ENCODE measurements at regions of chr17 and their contacts with region 1.

Region 1: DNA sequence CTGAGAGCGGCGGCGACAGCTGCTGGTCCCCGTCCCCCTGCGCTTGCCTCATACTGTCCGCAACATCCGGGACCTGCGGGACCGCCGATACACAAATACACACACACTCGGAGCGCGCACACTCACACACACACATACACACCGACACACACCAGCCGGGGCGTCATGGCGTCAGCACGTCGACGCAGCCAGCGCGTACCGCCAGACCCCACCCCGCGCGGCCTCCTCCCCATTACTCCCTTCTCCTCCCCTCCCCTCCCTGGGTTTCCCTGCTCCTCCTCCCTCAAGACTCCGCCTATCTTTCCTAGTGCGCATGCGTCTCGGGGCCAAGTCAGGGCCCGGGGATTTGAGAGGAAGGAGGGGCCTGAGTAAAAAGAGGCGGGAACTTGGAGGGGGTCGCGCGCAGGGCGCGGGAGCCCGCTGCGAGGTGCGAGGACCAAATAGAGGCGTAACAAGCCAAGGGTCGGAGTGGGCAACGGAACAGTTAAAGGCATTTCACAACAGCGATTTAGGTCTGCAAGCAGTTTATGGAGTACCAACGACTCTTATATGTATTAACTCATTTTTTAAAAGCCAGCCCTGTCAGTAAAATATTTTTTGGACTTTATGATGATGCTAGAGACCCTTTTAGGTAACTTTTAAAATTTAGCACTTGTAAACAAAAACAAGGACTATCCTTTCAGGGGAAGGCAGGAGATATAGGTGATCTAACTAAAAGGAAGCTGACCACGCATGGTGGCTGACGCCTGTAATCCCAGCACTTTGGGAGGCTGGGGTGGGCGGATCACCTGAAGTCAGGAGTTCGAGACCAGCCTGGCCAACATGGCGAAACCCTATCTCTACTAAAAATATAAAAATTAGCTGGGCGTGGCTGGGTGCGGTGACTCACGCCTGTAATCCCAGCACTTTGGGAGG is at the start of gene SPOP:
- DNase-seq: peak; percentile 100
- ATAC-seq: peak; percentile 99
- H3K4me3 ChIP-seq: peak within 1 kb of the TSS; percentile 69
- H3K27ac ChIP-seq: peak within 1 kb of the TSS; percentile 86
- H3K4me1 ChIP-seq: peaks cover 4% of the 10 kb centered on the region; the same call in 1 of the 2 replicates
- H3K27me3 ChIP-seq: peaks cover 7% of the 10 kb centered on the region
- CTCF ChIP-seq: no peak
- POLR2A ChIP-seq: peak; percentile 32; the same call in 1 of the 2 replicates
- RAD21 ChIP-seq: no peak
- total RNA-seq, gene SPOP: 47.5 and 56.9 TPM in 2 replicates

Region 2: DNA sequence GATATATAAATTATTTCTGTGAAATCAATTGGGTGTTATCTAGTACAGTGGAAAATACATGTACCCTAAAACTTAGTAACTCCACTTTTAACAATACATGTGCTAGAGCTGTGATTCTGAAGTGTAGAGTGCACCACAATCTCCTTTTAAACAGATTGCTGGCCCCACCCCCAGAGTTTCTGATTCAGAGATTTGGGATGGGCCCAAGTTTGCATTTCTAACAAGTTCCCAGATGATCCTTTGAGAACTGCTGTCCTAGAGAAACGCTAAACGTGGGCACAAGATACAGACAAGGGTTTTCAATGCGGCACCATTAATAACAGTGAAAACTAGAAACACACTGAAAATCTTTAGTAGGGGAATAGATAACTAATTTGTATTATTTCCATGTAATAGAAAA is 53.3 kb before region 1 on chr17:
- CTCF ChIA-PET with region 1: no interaction called
- POLR2A ChIA-PET with region 1: interaction called, 3 read pairs
- dilution Hi-C with region 1: no loop called
- in situ Hi-C with region 1: no loop called
- intact Hi-C with region 1: loop called (anchors 5 kb)
- DNase-seq: peak; percentile 62
- ATAC-seq: peak; percentile 81
- H3K4me3 ChIP-seq: no peak overlapping the region
- H3K27ac ChIP-seq: no peak overlapping the region
- H3K4me1 ChIP-seq: peaks cover 4% of the 10 kb centered on the region; the same call in 1 of the 2 replicates
- H3K27me3 ChIP-seq: no peaks in the 10 kb centered on the region
- CTCF ChIP-seq: no peak
- POLR2A ChIP-seq: no peak
- RAD21 ChIP-seq: no peak

Region 3: DNA sequence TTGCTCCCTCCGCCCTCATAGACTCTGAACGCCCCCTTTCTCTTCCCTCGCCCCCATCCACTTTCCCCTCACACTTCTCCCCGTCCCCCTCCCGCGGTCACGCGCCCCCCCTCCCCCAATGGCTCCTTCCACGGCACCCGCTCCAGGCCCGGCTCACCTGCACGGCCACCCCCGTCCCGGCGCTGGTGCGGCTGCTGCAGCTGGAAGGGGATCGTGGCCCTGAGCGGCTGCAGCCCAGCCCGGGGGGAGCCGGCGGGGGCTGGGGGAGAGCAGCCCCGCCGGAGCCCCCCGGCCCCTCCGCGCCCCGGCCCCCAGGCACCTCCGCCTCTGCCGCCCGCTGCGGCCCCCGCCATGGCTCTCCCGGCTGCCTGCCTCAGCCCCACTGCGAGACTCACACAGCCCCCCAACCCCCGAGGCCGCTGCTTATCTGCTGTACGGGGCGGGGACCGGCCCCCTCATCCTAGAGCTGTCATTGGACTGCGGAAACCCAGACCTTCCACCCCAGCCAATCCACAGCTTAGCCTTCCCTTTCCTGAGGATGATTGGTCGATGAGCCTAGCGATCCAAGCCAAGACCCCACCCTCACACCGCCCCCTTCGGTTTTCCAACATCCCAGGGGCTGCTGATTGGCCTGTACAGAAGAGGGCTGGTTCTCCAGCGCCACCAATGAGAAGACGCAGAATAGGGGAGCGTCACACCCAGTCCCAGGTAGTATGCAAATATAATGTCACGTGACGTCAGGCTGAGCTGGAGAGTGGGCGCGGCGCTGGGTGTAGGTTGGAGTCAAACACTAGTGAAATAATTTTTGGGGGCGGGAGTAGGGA is 85.8 kb after region 1 on chr17 and contains the start of gene FAM117A:
- CTCF ChIA-PET with region 1: no interaction called
- POLR2A ChIA-PET with region 1: no interaction called
- dilution Hi-C with region 1: no loop called
- in situ Hi-C with region 1: no loop called
- intact Hi-C with region 1: no loop called
- DNase-seq: peak; percentile 96
- ATAC-seq: peak; percentile 99
- H3K4me3 ChIP-seq: peak within 1 kb of the TSS; percentile 60
- H3K27ac ChIP-seq: no peak within 1 kb of the TSS
- H3K4me1 ChIP-seq: no peaks in the 10 kb centered on the region
- H3K27me3 ChIP-seq: peaks cover 27% of the 10 kb centered on the region
- CTCF ChIP-seq: no peak
- POLR2A ChIP-seq: peak; percentile 46; the same call in 1 of the 2 replicates
- RAD21 ChIP-seq: no peak
- total RNA-seq, gene FAM117A: 0.56 and 0.72 TPM in 2 replicates

Region 4: DNA sequence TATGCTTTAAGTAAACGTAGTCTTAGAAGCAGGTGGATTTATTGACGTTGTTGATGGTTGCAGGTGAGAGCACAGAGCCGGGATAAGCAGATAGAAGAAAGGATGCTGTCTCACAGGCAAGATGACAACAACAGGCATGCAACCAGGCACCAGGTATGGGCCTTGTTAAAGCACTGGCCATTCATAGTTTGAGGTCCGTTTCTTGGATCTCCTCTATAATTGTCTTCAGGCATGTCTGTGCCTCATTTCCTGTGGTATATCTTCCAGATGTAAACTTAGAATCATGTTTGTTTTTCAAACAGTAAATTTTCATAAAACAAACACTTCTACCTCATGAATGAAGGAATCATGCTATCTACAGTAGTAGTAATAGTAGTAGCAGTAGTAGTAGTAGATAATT is 130.9 kb after region 1 on chr17:
- CTCF ChIA-PET with region 1: no interaction called
- POLR2A ChIA-PET with region 1: no interaction called
- dilution Hi-C with region 1: no loop called
- in situ Hi-C with region 1: no loop called
- intact Hi-C with region 1: no loop called
- DNase-seq: no peak
- ATAC-seq: peak; percentile 17; the same call in 1 of the 2 replicates
- H3K4me3 ChIP-seq: no peak overlapping the region
- H3K27ac ChIP-seq: no peak overlapping the region
- H3K4me1 ChIP-seq: no peaks in the 10 kb centered on the region
- H3K27me3 ChIP-seq: no peaks in the 10 kb centered on the region
- CTCF ChIP-seq: no peak
- POLR2A ChIP-seq: no peak
- RAD21 ChIP-seq: no peak

Measured in IMR-90 (cell line).